Cardiac septum (tissue), 1 donor: ENCODE measurements at regions of chr15 and their contacts with region 1.

Region 1: DNA sequence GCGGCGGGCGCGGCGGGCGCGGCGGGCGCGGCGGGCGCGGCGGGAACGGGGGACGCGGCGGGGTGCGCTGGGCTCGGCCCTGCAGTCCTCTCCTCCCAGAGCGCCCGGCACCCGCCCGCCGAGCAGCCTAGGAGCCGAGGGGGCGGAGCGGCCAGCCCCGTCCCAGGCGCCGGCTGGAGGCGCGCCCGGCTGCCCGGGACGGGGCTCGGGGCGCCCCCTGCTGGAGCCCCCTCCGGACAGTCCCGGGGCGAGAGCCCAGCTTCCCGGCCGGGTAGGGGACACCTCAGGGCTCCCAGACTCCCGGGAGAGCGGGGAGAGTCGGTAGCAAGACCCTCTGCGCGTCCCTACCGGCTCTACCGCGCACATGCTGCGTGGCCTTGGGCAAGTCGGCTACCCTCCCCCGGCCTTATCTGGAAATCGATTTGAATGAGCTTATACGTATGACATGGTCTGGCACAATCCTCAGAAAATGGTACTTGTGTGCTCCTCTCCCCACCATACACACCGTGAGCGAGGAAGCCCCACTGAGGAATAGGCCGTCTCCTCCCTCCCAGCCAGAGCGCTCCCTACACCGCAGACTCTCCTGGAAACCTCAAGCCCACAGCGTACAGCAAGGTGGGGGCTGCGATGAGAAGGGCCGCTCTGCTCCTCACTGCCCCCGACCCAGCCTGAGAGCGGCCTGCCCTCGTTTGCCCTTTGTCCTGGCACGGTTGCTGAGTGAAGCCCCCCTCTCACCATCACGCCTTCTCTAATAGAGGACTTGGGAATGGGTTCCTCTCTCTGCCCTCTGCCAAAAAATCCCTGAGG is at the start of gene DAPK2:
- DNase-seq: peak; percentile 91
- total RNA-seq, gene DAPK2: 31.8 TPM

Region 2: GRCh38 chr15:63752075-63752684 is 294.4 kb before region 1 on chr15:
- intact Hi-C with region 1: loop called (anchors 5 kb)
- DNase-seq: no peak

Region 3: DNA sequence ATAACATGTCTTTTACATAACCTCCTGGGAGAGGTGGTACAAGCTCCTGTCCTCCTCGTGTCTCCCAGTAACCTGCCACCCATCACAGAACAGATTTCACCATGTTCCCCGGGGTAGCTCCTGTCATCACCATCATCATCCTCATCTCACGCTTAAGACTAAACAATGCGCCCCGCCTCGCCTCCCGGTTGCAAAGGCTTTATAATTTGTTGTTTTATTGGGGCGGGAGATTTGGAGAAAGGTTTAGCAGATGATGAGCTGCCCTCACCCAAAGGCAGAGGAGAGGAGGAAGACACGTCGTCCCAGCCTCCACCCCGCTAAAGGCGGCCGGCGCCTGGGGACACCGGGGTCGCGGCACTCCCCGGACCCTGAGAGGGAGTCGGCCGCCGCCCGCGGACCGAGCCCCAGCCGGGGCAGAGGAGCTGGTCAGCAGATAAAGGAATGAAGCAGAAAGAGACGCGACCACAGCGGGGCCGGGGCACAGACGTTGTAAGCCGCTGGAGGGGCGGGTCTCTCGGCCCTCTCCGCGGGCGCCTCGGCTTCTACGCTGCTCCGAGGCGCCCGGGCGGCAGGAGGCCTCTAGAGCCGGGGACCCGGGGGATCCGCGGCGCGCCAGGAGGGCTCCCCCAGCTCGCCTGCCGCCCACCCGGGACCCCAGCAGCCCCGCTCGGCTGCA is 213.4 kb before region 1 on chr15:
- intact Hi-C with region 1: loop called (anchors 5 kb)
- DNase-seq: peak; percentile 75

Region 4: DNA sequence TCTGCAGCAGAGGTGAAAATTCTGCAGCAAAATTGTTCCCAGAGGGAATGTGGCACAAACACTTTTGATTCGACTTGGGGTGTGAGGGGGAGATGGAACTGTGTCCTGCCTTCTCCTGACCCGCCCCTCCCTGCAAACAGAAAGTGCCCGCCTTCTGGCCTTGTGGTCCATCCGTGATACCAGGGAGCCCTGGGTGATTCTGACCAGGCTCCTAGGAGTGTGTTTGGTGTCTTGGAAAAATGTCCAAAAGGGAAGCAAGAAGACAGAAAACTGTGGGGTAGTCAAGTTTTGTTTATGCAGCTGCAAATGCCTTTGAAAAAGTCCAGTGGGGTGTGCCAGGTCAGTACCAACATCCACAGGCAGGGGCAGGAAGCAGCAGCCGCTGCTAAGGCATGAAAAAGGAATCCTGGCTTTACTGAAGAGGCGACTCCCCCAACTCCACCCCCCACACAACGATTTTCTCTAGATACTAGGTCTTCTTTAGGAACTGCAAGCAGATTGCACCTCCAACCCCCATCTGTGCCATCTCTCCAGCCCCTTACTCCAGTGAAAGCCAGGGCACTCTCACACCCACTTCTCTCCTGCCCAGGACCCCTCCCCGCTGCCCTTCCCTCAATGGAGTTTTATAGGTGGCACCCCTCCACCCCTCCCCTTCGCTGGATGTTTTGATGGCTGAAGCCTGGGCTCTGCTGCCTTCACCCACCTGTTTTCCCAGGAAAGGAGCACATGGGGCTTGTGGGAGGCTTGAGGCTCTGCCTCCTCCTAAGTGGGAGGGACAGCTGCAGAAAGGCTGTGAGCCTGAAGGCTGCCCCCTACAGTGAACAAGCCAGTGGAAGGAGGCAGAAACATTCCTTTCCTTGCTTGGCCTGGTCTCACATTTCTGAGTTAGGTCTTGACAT is 130.4 kb before region 1 on chr15:
- intact Hi-C with region 1: loop called (anchors 5 kb)
- DNase-seq: no peak

Region 5: GRCh38 chr15:63945007-63945788 is 101.4 kb before region 1 on chr15:
- intact Hi-C with region 1: loop called (anchors 5 kb)
- DNase-seq: peak; percentile 86

Region 6: DNA sequence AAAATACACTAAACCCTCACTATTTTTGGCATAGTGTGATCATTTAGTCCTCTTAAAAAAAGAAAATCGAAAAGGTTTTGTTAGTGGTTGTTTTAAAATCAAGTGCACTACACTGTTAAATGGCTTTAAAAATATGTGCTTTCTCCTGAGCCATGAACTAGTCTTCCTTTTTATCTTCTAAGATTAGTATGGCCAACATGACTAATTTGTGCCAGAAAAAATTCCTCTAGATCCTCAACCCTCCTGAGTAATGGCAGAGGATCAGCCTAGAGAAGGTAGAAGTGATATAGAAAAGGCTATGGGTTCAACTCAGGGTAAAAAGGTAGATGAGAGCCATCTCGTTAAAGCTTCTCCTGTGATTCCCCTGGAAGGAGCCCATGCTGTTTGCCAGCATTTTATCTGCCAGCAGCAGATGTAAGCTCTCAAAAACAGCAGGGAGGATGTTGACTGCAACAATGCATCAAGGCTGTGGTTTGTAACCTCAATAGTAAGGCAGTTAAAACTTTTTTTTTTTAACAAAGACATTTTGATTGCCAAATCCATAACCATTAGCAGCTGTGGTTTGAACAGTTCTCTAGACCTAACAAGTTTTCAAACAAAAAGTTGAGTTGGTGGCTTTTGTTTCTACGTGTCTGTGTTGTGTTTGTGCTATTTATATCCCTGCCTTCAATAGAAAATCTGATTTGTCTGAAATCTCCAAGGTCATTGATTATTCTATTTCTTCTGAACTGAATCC is 383.6 kb after region 1 on chr15:
- intact Hi-C with region 1: no loop called
- DNase-seq: no peak